GM12878 (cell line): ENCODE measurements at regions of chr3 and their contacts with region 1.

Region 1: GRCh38 chr3:116281313-116282143 is 163.8 kb downstream of the LSAMP start:
- DNase-seq: no peak
- ATAC-seq: peak; percentile 89
- H3K4me3 ChIP-seq: no peak overlapping the region
- H3K27ac ChIP-seq: no peak overlapping the region
- H3K4me1 ChIP-seq: no peaks in the 10 kb centered on the region
- H3K27me3 ChIP-seq: no peaks in the 10 kb centered on the region; a peak in 2 of 4 replicates
- CTCF ChIP-seq: no peak
- EP300 ChIP-seq: peak in 1 of 2 experiments; percentile 43; a peak in 1 of 4 replicates
- POLR2A ChIP-seq: no peak
- RAD21 ChIP-seq: no peak

Region 2: GRCh38 chr3:116256843-116257485 is 24.6 kb before region 1 on chr3:
- CTCF ChIA-PET with region 1: interaction called, 5 read pairs
- POLR2A ChIA-PET with region 1: no interaction called
- RAD21 ChIA-PET with region 1: no interaction called
- SMC1A ChIA-PET with region 1: interaction called, 11 read pairs
- in situ Hi-C with region 1: no loop called
- intact Hi-C with region 1: no loop called
- DNase-seq: no peak
- ATAC-seq: peak; percentile 22; the same call in 2 of the 3 replicates
- H3K4me3 ChIP-seq: no peak overlapping the region
- H3K27ac ChIP-seq: no peak overlapping the region
- H3K4me1 ChIP-seq: no peaks in the 10 kb centered on the region
- H3K27me3 ChIP-seq: no peaks in the 10 kb centered on the region
- CTCF ChIP-seq: no peak
- EP300 ChIP-seq: no peak
- POLR2A ChIP-seq: no peak
- RAD21 ChIP-seq: no peak

Region 3: GRCh38 chr3:116263842-116264545 is 17.5 kb before region 1 on chr3:
- CTCF ChIA-PET with region 1: interaction called, 5 read pairs
- POLR2A ChIA-PET with region 1: interaction called, 3 read pairs
- RAD21 ChIA-PET with region 1: interaction called, 11 read pairs
- SMC1A ChIA-PET with region 1: interaction called, 35 read pairs
- in situ Hi-C with region 1: no loop called
- intact Hi-C with region 1: no loop called
- DNase-seq: no peak
- ATAC-seq: no peak
- H3K4me3 ChIP-seq: no peak overlapping the region
- H3K27ac ChIP-seq: no peak overlapping the region
- H3K4me1 ChIP-seq: no peaks in the 10 kb centered on the region
- H3K27me3 ChIP-seq: no peaks in the 10 kb centered on the region
- CTCF ChIP-seq: no peak
- EP300 ChIP-seq: no peak
- POLR2A ChIP-seq: no peak
- RAD21 ChIP-seq: no peak